ENCODE measurements at regions of chr17 and their contacts with region 1.

Region 1: DNA sequence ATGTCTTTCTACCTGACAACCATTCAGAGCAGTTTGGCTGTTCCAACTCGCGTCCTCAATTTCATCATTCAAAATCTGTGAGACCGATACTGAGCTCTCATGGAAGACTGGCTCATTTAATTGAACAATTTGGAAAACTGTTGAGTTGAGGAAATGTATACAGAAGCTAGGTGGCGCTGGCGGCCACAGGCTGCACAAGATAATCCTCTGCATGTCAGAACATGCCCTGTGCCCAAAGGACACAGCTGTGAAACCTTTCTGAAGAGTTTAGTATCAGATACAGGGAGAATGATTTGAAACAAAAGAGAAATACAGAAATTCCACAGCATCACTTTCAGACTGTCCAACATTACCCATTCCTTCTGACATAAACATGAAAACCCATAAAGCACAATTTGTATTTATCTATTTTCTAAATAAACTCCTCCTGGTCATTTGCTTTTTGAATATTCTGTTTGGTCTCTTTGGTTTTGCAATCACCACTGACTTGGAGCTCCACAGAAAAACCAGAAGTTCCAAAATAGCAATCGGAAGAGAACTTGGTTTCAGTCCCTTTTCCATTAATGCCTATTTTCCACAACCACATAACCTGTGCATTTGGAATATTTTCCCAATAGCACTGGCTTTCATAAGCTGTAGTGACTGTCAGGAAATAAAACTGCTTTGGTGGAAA is 192.8 kb downstream of the MAP2K6 start:
- DNase-seq: peak; percentile 71
- H3K4me3 ChIP-seq: no peak overlapping the region
- H3K27ac ChIP-seq: peak overlapping the region; percentile 40
- H3K27me3 ChIP-seq: no peaks in the 10 kb centered on the region
- CTCF ChIP-seq: peak; percentile 89

Region 2: GRCh38 chr17:69516225-69516624 is 91.1 kb before region 1 on chr17:
- CTCF ChIA-PET with region 1: no interaction called
- POLR2A ChIA-PET with region 1: no interaction called
- DNase-seq: no peak
- H3K4me3 ChIP-seq: no peak overlapping the region
- H3K27ac ChIP-seq: no peak overlapping the region
- H3K27me3 ChIP-seq: no peaks in the 10 kb centered on the region
- CTCF ChIP-seq: no peak

Region 3: GRCh38 chr17:69539781-69540319 is 67.4 kb before region 1 on chr17:
- CTCF ChIA-PET with region 1: interaction called, 11 read pairs
- POLR2A ChIA-PET with region 1: interaction called, 6 read pairs
- DNase-seq: peak; percentile 86
- H3K4me3 ChIP-seq: peak overlapping the region; percentile 35
- H3K27ac ChIP-seq: peak overlapping the region; percentile 98
- H3K27me3 ChIP-seq: no peaks in the 10 kb centered on the region
- CTCF ChIP-seq: no peak

Region 4: DNA sequence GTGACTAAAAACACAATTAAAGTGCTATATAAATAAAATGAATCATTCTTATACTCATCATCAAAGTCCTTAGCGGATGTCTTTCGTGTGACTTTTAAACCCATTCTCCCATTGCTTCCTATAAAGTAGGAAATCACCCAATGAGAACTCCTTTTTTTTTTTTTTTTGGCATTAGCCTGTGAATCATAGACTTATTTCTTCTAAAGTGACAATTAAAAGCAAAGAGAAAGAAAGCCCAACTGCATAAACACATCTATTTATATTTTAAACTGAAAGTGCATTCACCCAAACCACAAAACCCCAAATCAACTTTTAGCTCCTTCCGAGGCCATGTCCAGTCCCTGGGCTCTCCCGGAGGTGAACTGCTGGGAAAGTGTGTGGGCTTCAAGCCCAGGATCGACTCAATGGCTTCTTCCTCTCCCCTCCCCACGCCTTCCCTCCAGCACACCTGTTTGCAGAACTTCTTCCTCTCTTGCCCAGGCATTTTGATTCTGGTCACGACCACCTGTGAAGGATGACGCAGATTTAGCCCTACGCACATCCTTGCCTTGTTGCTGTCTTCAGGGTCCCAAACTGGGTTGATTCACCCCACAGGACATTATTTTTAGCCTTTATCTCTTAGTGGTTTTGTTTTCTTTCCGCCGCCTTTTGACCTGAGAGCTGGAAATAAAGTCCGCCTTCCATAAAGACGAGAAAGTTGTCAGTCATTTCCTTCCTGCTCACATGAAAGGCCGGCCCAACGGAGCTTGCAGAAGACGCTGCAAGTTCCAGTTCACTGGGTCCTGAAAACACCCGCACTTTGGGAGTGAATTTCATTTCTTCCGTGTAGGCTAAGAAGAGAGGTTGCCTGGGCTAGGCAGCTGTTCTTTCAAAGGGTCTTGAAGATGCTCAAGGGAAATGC is 26.0 kb before region 1 on chr17:
- CTCF ChIA-PET with region 1: interaction called, 44 read pairs
- POLR2A ChIA-PET with region 1: no interaction called
- DNase-seq: no peak
- H3K4me3 ChIP-seq: no peak overlapping the region
- H3K27ac ChIP-seq: no peak overlapping the region
- H3K27me3 ChIP-seq: no peaks in the 10 kb centered on the region
- CTCF ChIP-seq: no peak

Region 5: DNA sequence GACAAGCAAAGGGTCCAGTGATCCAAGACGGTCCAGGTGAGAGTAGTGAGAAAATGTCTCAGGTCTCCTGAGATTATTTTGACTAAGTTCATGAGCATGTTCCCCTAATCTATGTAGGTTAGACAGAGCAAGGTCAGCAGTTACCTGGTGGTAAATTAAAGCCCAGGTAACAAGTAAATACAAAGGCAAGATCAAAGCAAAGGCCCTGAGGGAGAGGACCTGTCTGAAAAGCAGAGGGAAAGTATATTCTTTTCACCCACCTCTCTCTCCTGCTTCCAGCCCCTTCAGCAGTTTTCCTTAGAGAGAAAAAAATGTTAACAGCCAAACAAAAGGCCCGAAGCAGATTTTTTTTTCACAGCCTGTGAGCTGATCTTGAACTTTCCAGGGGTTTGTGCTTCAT is 109.9 kb after region 1 on chr17:
- CTCF ChIA-PET with region 1: interaction called, 12 read pairs
- POLR2A ChIA-PET with region 1: no interaction called
- DNase-seq: no peak
- H3K4me3 ChIP-seq: no peak overlapping the region
- H3K27ac ChIP-seq: no peak overlapping the region
- H3K27me3 ChIP-seq: no peaks in the 10 kb centered on the region
- CTCF ChIP-seq: no peak

Region 6: GRCh38 chr17:69908626-69909368 is 301.5 kb after region 1 on chr17:
- CTCF ChIA-PET with region 1: interaction called, 10 read pairs
- POLR2A ChIA-PET with region 1: interaction called, 3 read pairs
- DNase-seq: no peak
- H3K4me3 ChIP-seq: no peak overlapping the region
- H3K27ac ChIP-seq: no peak overlapping the region
- H3K27me3 ChIP-seq: no peaks in the 10 kb centered on the region
- CTCF ChIP-seq: no peak

Region 7: DNA sequence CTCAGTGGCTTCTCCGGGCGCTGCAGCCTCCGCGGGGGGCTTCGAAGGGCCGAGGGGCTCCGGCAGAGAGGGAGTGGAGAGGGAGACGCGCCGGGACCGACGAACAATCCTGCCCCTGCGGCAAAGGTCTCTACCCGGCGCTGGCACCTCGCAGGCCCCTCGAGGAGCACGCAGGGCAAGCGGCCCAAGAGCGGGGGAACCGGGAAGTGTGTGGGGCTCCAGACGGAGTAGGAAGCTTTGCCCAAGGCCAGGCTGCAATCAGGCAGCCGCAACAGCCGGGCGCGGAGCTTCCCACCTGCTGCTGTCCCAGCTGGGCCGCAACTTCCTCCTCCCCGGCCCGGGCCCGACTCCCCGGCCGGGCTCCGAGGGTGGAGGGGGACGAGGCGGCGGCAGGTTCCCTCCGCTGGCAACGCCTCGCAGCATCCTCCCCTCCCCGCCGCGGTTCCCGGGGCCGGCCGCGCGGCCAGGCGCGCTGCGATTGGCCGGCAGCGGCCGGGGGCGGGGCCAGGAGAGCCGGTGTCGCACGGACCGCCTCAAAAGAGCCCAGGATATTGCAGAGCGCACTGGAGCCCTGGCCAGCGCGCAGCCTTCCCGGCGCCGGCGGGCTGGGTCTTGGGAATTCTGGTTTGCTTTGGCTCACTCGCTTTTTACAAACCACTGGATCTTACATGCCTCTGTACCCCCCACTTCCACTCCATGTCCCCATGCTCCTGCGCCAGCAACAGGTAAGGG is 561.8 kb after region 1 on chr17 and contains the start of gene KCNJ2:
- CTCF ChIA-PET with region 1: interaction called, 57 read pairs
- POLR2A ChIA-PET with region 1: interaction called, 8 read pairs
- DNase-seq: no peak
- H3K4me3 ChIP-seq: peak within 1 kb of the TSS; percentile 71
- H3K27ac ChIP-seq: no peak within 1 kb of the TSS
- H3K27me3 ChIP-seq: peaks cover 14% of the 10 kb centered on the region
- CTCF ChIP-seq: no peak
- polyA plus RNA-seq, gene KCNJ2: 1.7 and 2.4 TPM in 2 replicates

Measured in AG04450 (cell line).